ENCODE measurements at regions of chr2 and their contacts with region 1.

Region 1: GRCh38 chr2:45494269-45494977 is 116.6 kb downstream of the SRBD1 start:
- DNase-seq: no peak
- H3K4me3 ChIP-seq: no peak overlapping the region
- H3K27ac ChIP-seq: no peak overlapping the region
- H3K4me1 ChIP-seq: no peaks in the 10 kb centered on the region
- H3K27me3 ChIP-seq: no peaks in the 10 kb centered on the region
- CTCF ChIP-seq: peak; percentile 75 to 81 (median 78)
- EP300 ChIP-seq: no peak
- POLR2A ChIP-seq: no peak

Region 2: GRCh38 chr2:44981136-44982108 is 513.0 kb before region 1 on chr2:
- intact Hi-C with region 1: loop called (anchors 2 kb)
- DNase-seq: no peak
- H3K4me3 ChIP-seq: no peak overlapping the region
- H3K27ac ChIP-seq: no peak overlapping the region
- H3K4me1 ChIP-seq: peaks cover 0 to 6% (median 0%) of the 10 kb centered on the region in 4 donors
- H3K27me3 ChIP-seq: peaks cover 0 to 58% (median 0%) of the 10 kb centered on the region in 4 donors
- CTCF ChIP-seq: peak; percentile 76 to 86 (median 84)
- EP300 ChIP-seq: no peak
- POLR2A ChIP-seq: no peak

Measured in esophagus muscularis mucosa (tissue), 4 donors.